ENCODE measurements at regions of chr11 and their contacts with region 1.

Region 1: DNA sequence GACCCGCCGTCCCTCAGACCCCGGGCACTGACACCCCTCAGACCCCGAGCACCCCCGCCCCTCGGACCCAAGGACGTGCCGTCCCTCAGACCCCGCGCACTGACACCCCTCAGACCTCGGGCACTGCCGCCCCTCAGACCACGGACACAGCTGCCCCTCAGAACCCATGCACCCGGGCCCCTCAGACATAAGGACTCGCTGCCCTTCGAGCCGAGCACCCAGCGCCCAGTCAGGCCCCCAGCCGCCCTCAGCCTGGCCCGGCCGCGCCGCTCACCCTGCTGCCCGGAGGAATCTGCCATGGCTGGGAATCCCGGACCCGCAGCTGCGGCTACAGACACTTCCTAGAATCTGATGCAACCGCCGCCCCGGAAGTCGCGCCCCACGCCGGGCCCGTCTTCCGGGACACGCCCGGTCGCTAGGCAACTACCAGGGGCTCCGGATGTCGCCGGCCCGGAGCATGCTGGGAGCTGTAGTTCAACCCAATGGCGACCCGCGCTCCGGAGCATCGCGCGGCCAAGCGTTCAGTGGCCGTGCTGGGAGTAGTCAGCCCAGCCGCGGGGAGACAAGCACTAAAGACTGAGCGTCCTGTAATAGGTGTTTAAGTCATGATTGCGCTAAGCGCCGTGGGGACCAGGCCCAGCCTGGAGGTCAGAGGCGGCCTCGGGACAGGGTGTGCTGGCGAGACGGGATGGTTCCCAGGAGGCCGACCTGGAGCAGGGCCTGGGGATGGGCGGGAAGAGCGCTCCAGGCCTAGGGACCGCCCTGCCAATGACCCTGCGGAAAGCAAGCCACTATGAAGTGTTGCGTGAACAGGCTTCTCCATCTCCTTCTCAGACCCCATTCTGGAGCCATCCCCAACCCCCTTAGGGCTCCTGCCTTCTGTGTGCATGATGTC is at the start of gene CARS1:
- DNase-seq: peak; percentile 95
- H3K4me3 Mint-ChIP-seq: peak within 1 kb of the TSS; percentile 96
- H3K27ac Mint-ChIP-seq: peak within 1 kb of the TSS; percentile 92
- H3K4me1 Mint-ChIP-seq: peaks cover 15% of the 10 kb centered on the region
- H3K27me3 Mint-ChIP-seq: no peaks in the 10 kb centered on the region
- CTCF ChIP-seq: no peak
- total RNA-seq, gene CARS1: 144 and 150 TPM in 2 replicates

Region 2: GRCh38 chr11:2992234-2992996 is 64.9 kb before region 1 on chr11 and contains the start of gene NAP1L4:
- CTCF ChIA-PET with region 1: no interaction called
- POLR2A ChIA-PET with region 1: interaction called, 21 read pairs
- intact Hi-C with region 1: no loop called
- DNase-seq: peak; percentile 97
- H3K4me3 Mint-ChIP-seq: peak within 1 kb of the TSS; percentile 96
- H3K27ac Mint-ChIP-seq: peak within 1 kb of the TSS; percentile 99
- H3K4me1 Mint-ChIP-seq: peaks cover 21% of the 10 kb centered on the region
- H3K27me3 Mint-ChIP-seq: no peaks in the 10 kb centered on the region
- CTCF ChIP-seq: no peak
- total RNA-seq, gene NAP1L4: 103 TPM in 2 replicates

Region 3: GRCh38 chr11:3086114-3086513 is 28.8 kb after region 1 on chr11:
- CTCF ChIA-PET with region 1: interaction called, 54 read pairs
- POLR2A ChIA-PET with region 1: interaction called, 13 read pairs
- intact Hi-C with region 1: no loop called
- DNase-seq: no peak
- H3K4me3 Mint-ChIP-seq: no peak overlapping the region
- H3K27ac Mint-ChIP-seq: no peak overlapping the region
- H3K4me1 Mint-ChIP-seq: peaks cover 7% of the 10 kb centered on the region
- H3K27me3 Mint-ChIP-seq: peaks cover under 1% of the 10 kb centered on the region
- CTCF ChIP-seq: no peak

Region 4: GRCh38 chr11:3091791-3092602 is 34.7 kb after region 1 on chr11:
- CTCF ChIA-PET with region 1: interaction called, 54 read pairs
- POLR2A ChIA-PET with region 1: interaction called, 13 read pairs
- intact Hi-C with region 1: no loop called
- DNase-seq: peak; percentile 83
- H3K4me3 Mint-ChIP-seq: no peak overlapping the region
- H3K27ac Mint-ChIP-seq: no peak overlapping the region
- H3K4me1 Mint-ChIP-seq: peaks cover 27% of the 10 kb centered on the region
- H3K27me3 Mint-ChIP-seq: no peaks in the 10 kb centered on the region
- CTCF ChIP-seq: peak; percentile 100

Measured in MCF 10A (cell line).